IMR-90 (cell line): ENCODE measurements at regions of chr10 and their contacts with region 1.

Region 1: GRCh38 chr10:103820101-103821062 is 35.0 kb downstream of the SH3PXD2A start:
- DNase-seq: peak; percentile 60
- ATAC-seq: peak; percentile 31; the same call in 1 of the 2 replicates
- H3K4me3 ChIP-seq: no peak overlapping the region
- H3K27ac ChIP-seq: no peak overlapping the region
- H3K4me1 ChIP-seq: peaks cover 19% of the 10 kb centered on the region
- H3K27me3 ChIP-seq: peaks cover 1% of the 10 kb centered on the region; the same call in 1 of the 2 replicates
- CTCF ChIP-seq: no peak
- POLR2A ChIP-seq: no peak
- RAD21 ChIP-seq: no peak

Region 2: GRCh38 chr10:103792547-103792946 is 27.8 kb before region 1 on chr10:
- CTCF ChIA-PET with region 1: no interaction called
- POLR2A ChIA-PET with region 1: interaction called, 13 read pairs
- dilution Hi-C with region 1: no loop called
- in situ Hi-C with region 1: no loop called
- intact Hi-C with region 1: no loop called
- DNase-seq: peak; percentile 69
- ATAC-seq: peak; percentile 77
- H3K4me3 ChIP-seq: no peak overlapping the region
- H3K27ac ChIP-seq: no peak overlapping the region
- H3K4me1 ChIP-seq: peaks cover 2% of the 10 kb centered on the region
- H3K27me3 ChIP-seq: no peaks in the 10 kb centered on the region
- CTCF ChIP-seq: no peak
- POLR2A ChIP-seq: no peak
- RAD21 ChIP-seq: no peak

Region 3: GRCh38 chr10:104005172-104005863 is 184.9 kb after region 1 on chr10:
- CTCF ChIA-PET with region 1: no interaction called
- POLR2A ChIA-PET with region 1: no interaction called
- dilution Hi-C with region 1: no loop called
- in situ Hi-C with region 1: no loop called
- intact Hi-C with region 1: no loop called
- DNase-seq: no peak
- ATAC-seq: no peak
- H3K4me3 ChIP-seq: no peak overlapping the region
- H3K27ac ChIP-seq: no peak overlapping the region
- H3K4me1 ChIP-seq: no peaks in the 10 kb centered on the region
- H3K27me3 ChIP-seq: no peaks in the 10 kb centered on the region
- CTCF ChIP-seq: no peak
- POLR2A ChIP-seq: no peak
- RAD21 ChIP-seq: no peak